Activated B cell treated with CpG ODN at 0.5 μM for 24 hours (primary cell): ENCODE measurements at regions of chr6 and their contacts with region 1.

Region 1: GRCh38 chr6:116087437-116088027 is 13.1 kb upstream of the NT5DC1 start:
- DNase-seq: peak; percentile 18
- ATAC-seq: peak; percentile 95
- H3K4me3 Mint-ChIP-seq: peak overlapping the region; percentile 62
- H3K27ac Mint-ChIP-seq: peak overlapping the region; percentile 87
- H3K4me1 Mint-ChIP-seq: peaks cover 34% of the 10 kb centered on the region
- H3K27me3 Mint-ChIP-seq: no peaks in the 10 kb centered on the region
- CTCF ChIP-seq: no peak

Region 2: GRCh38 chr6:115740907-115741306 is 346.6 kb before region 1 on chr6:
- CTCF ChIA-PET with region 1: no interaction called
- POLR2A ChIA-PET with region 1: no interaction called
- intact Hi-C with region 1: no loop called
- DNase-seq: no peak
- ATAC-seq: no peak
- H3K4me3 Mint-ChIP-seq: no peak overlapping the region
- H3K27ac Mint-ChIP-seq: no peak overlapping the region
- H3K4me1 Mint-ChIP-seq: no peaks in the 10 kb centered on the region
- H3K27me3 Mint-ChIP-seq: no peaks in the 10 kb centered on the region
- CTCF ChIP-seq: no peak

Region 3: GRCh38 chr6:116010790-116011401 is 76.6 kb before region 1 on chr6:
- CTCF ChIA-PET with region 1: interaction called, 14 read pairs
- POLR2A ChIA-PET with region 1: interaction called, 5 read pairs
- intact Hi-C with region 1: loop called (anchors 2 kb)
- DNase-seq: peak; percentile 29
- ATAC-seq: peak; percentile 64
- H3K4me3 Mint-ChIP-seq: no peak overlapping the region
- H3K27ac Mint-ChIP-seq: no peak overlapping the region
- H3K4me1 Mint-ChIP-seq: peaks cover 32% of the 10 kb centered on the region
- H3K27me3 Mint-ChIP-seq: peaks cover 2% of the 10 kb centered on the region
- CTCF ChIP-seq: peak; percentile 45

Region 4: GRCh38 chr6:116047173-116047933 is 40.2 kb before region 1 on chr6:
- CTCF ChIA-PET with region 1: no interaction called
- POLR2A ChIA-PET with region 1: no interaction called
- intact Hi-C with region 1: loop called (anchors 5 kb)
- DNase-seq: no peak
- ATAC-seq: peak; percentile 52
- H3K4me3 Mint-ChIP-seq: no peak overlapping the region
- H3K27ac Mint-ChIP-seq: no peak overlapping the region
- H3K4me1 Mint-ChIP-seq: peaks cover 13% of the 10 kb centered on the region
- H3K27me3 Mint-ChIP-seq: peaks cover 2% of the 10 kb centered on the region
- CTCF ChIP-seq: no peak

Region 5: GRCh38 chr6:116165596-116165995 is 78.1 kb after region 1 on chr6:
- CTCF ChIA-PET with region 1: no interaction called
- POLR2A ChIA-PET with region 1: no interaction called
- intact Hi-C with region 1: loop called (anchors 2 kb)
- DNase-seq: peak; percentile 62
- ATAC-seq: peak; percentile 100
- H3K4me3 Mint-ChIP-seq: peak overlapping the region; percentile 42
- H3K27ac Mint-ChIP-seq: no peak overlapping the region
- H3K4me1 Mint-ChIP-seq: peaks cover 39% of the 10 kb centered on the region
- H3K27me3 Mint-ChIP-seq: no peaks in the 10 kb centered on the region
- CTCF ChIP-seq: no peak